ENCODE measurements at regions of chr14 and their contacts with region 1.

Region 1: GRCh38 chr14:75132382-75133086 is 5.7 kb upstream of the NEK9 start:
- DNase-seq: peak; percentile 81
- H3K4me3 ChIP-seq: no peak overlapping the region
- H3K27ac ChIP-seq: no peak overlapping the region
- H3K4me1 ChIP-seq: peaks cover 10% of the 10 kb centered on the region
- H3K27me3 ChIP-seq: no peaks in the 10 kb centered on the region
- CTCF ChIP-seq: peak; percentile 38 to 55
- POLR2A ChIP-seq: no peak

Region 2: DNA sequence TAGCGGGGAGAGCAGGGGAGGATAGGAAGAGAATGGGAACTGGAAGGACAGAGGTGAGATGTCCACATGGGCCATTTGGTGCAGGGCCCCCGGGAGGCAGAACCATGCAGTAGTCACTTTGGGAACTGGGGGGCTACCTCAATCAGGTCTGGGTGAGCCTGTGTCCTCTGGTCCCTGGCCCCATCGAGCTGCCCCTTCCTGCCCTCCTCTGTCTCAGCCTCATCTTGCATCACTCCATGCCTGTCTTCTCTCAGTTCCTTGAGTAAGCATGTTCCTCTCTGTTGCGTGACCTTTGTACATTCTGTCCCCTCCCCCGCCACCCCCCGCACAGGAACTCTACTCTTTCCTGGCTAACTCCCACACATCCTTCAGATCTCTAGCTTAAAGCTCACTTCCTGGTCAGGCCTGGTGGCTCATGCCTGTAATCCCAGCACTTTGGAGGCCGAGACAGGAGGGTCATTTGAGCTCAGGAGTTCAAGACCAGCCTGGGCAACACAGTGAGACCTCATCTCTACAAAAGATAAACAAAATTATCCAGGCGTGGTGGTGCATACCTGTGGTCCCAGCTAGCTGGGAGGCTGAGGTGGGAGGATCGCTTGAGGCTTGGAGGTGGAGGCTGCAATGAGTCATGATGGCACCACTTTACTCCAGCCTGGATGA is 169.3 kb after region 1 on chr14:
- CTCF ChIA-PET with region 1: interaction called, 175 read pairs
- POLR2A ChIA-PET with region 1: no interaction called
- dilution Hi-C with region 1: loop called (anchors 25 kb)
- intact Hi-C with region 1: loop called (anchors 1 kb)
- DNase-seq: peak; percentile 64
- H3K4me3 ChIP-seq: no peak overlapping the region
- H3K27ac ChIP-seq: no peak overlapping the region
- H3K4me1 ChIP-seq: peaks cover 7% of the 10 kb centered on the region
- H3K27me3 ChIP-seq: no peaks in the 10 kb centered on the region
- CTCF ChIP-seq: no peak
- POLR2A ChIP-seq: no peak